Psoas muscle (tissue), 8 donors: ENCODE measurements at regions of chr1 and their contacts with region 1.

Region 1: GRCh38 chr1:25616095-25616986 is at the start of gene MAN1C1:
- DNase-seq: peak; percentile 91 to 94
- ATAC-seq: peak; percentile 90 to 94 (median 92)
- H3K4me3 ChIP-seq: peak within 1 kb of the TSS; percentile 84
- H3K27ac ChIP-seq: peak within 1 kb of the TSS; percentile 74
- H3K4me1 ChIP-seq: peaks cover 26% of the 10 kb centered on the region
- H3K27me3 ChIP-seq: no peaks in the 10 kb centered on the region
- CTCF ChIP-seq: peak; percentile 20
- total RNA-seq, gene MAN1C1: 1.8 to 6.7 (median 2.5) TPM

Region 2: DNA sequence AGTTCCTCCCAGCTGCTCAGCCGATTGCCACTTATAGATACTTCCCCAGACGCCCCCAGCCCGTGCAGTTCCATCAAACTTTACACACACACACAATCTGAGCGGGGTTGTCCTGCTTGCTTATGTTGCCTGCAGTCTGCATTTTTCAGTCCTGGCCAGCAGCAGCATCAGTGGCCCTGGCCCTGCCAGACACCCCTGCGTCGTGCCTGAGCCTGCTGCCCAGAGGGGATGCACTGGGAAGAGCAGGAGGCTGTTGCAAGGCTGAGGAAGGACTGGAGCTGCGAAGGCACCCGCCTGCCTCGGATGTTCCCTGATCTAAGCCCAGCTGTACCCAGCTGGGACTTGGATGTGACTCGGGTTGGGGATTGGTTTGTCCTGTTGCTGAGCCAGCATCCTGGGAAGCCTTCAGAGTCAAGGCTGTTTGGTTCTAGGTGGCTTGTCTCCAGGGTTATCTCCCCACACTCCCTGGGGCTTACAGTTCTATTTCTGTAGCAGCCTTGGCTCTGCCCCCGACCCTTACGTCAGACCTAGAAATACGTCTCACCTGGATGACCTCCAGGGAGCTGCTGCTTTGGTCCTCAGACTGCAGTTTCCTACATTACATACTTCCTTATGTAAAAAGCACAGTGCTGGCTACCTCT is 42.6 kb after region 1 on chr1:
- intact Hi-C with region 1: loop called (anchors 5 kb)
- DNase-seq: peak; percentile 63 to 89
- ATAC-seq: peak; percentile 95 to 99 (median 98)
- H3K4me3 ChIP-seq: no peak overlapping the region
- H3K27ac ChIP-seq: peak overlapping the region; percentile 62
- H3K4me1 ChIP-seq: peaks cover 26% of the 10 kb centered on the region
- H3K27me3 ChIP-seq: no peaks in the 10 kb centered on the region
- CTCF ChIP-seq: no peak

Region 3: GRCh38 chr1:25695090-25695770 is 78.9 kb after region 1 on chr1:
- intact Hi-C with region 1: loop called (anchors 2 to 5 kb)
- DNase-seq: peak; percentile 83 to 90
- ATAC-seq: peak; percentile 75 to 81 (median 80)
- H3K4me3 ChIP-seq: no peak overlapping the region
- H3K27ac ChIP-seq: peak overlapping the region; percentile 80
- H3K4me1 ChIP-seq: peaks cover 50% of the 10 kb centered on the region
- H3K27me3 ChIP-seq: no peaks in the 10 kb centered on the region
- CTCF ChIP-seq: peak; percentile 42

Region 4: GRCh38 chr1:25743826-25744581 is 127.7 kb after region 1 on chr1:
- intact Hi-C with region 1: loop called in 1 of 2 experiments (anchors 5 kb)
- DNase-seq: peak; percentile 71 to 83
- ATAC-seq: peak; percentile 83 to 87 (median 86)
- H3K4me3 ChIP-seq: peak overlapping the region; percentile 24
- H3K27ac ChIP-seq: peak overlapping the region; percentile 93
- H3K4me1 ChIP-seq: peaks cover 22% of the 10 kb centered on the region
- H3K27me3 ChIP-seq: no peaks in the 10 kb centered on the region
- CTCF ChIP-seq: peak; percentile 50